ENCODE measurements at regions of chr1 and their contacts with region 1.

Region 1: DNA sequence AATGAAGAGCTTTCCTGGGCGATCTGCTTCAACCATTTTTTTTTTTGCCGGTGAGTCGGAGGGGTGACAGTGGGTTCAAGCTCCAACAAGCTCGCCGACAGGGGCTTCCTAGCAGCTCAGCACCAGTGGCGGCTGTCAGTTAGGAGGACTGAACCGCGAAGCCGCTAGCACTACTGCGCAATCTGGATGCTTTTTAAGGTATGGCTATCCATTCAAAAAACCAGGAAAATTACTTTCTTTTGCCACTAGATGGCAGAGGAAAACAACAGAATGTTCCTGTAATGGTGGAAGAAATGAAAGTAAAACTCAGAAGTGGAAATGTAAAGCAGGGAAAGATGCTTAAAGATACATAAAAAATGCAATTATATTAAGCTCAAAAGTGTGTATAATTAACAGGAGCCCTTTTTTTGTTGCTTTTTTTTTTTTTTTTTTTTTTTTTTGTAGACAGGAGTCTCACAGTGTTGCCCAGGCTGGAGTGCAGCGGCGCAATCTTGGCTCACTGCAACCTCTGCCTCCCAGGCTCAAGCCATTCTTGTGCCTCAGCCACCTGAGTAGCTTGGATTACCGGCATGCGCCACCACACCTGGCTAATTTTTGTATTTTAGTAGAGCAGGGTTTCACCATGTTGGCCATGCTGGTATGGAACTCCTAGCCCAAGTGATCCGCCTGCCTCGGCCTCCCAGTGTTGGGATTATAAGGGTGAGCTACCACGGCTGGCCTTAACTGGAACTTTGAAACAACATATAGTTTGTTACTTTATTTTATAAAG is 8.5 kb downstream of the KYAT3 start:
- DNase-seq: peak; percentile 76
- ATAC-seq: peak; percentile 77
- H3K4me3 ChIP-seq: peak overlapping the region in 3 of 5 experiments; percentile 15 to 28 (median 23)
- H3K4me3 Mint-ChIP-seq: peak overlapping the region; percentile 76
- H3K27ac ChIP-seq: peak overlapping the region; percentile 40 to 62
- H3K27ac Mint-ChIP-seq: peak overlapping the region; percentile 64
- H3K4me1 ChIP-seq: peaks cover 15 to 17% of the 10 kb centered on the region in 2 donors
- H3K4me1 Mint-ChIP-seq: peaks cover 51% of the 10 kb centered on the region
- H3K27me3 ChIP-seq: no peaks in the 10 kb centered on the region
- H3K27me3 Mint-ChIP-seq: no peaks in the 10 kb centered on the region
- CTCF ChIP-seq: peak; percentile 76

Region 2: DNA sequence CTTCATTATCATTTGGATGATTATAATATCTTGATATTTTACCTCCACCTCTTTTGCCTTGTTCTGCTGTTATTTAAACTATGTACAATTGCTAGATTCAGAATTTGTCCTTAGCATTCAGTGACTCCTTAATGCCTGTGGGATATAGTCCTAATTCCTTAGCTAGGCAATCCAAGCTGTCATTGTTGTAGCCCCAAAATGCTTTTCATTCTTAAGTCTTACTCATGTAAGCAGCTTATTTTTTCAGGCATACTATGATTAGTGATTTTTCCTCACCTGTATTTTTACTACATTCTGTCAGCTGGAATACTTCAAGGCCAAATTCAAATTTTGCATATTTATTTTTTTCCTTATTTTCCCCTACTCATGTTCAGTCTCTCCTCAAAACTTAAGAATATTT is 286.5 kb before region 1 on chr1:
- CTCF ChIA-PET with region 1: no interaction called
- POLR2A ChIA-PET with region 1: no interaction called
- intact Hi-C with region 1: no loop called
- DNase-seq: no peak
- ATAC-seq: no peak
- H3K4me3 ChIP-seq: no peak overlapping the region
- H3K4me3 Mint-ChIP-seq: no peak overlapping the region
- H3K27ac ChIP-seq: no peak overlapping the region
- H3K27ac Mint-ChIP-seq: no peak overlapping the region
- H3K4me1 ChIP-seq: peaks cover 17 to 24% of the 10 kb centered on the region in 2 donors
- H3K4me1 Mint-ChIP-seq: peaks cover 51% of the 10 kb centered on the region
- H3K27me3 ChIP-seq: no peaks in the 10 kb centered on the region
- H3K27me3 Mint-ChIP-seq: no peaks in the 10 kb centered on the region
- CTCF ChIP-seq: no peak

Region 3: DNA sequence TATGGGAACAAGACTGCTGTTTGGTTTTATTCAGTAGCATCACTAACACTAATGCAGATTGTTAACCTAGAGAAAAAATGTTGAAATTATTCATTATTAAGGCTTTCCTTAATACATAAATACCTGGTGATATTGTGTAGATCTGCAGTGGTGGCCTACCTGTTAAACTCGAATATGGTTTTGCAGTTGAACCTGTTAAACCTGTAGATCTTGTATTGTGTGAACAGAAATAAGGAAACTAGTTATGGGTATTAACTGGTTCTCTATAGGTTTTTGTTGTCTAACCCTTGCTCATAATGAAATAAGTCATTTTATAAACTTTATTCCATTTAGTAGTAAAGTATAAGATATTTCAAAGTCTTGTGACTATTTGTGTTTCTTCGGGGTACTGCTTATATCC is 276.0 kb before region 1 on chr1:
- CTCF ChIA-PET with region 1: no interaction called
- POLR2A ChIA-PET with region 1: no interaction called
- intact Hi-C with region 1: no loop called
- DNase-seq: no peak
- ATAC-seq: no peak
- H3K4me3 ChIP-seq: no peak overlapping the region
- H3K4me3 Mint-ChIP-seq: no peak overlapping the region
- H3K27ac ChIP-seq: no peak overlapping the region
- H3K27ac Mint-ChIP-seq: no peak overlapping the region
- H3K4me1 ChIP-seq: no peaks in the 10 kb centered on the region
- H3K4me1 Mint-ChIP-seq: peaks cover 12% of the 10 kb centered on the region
- H3K27me3 ChIP-seq: no peaks in the 10 kb centered on the region
- H3K27me3 Mint-ChIP-seq: no peaks in the 10 kb centered on the region
- CTCF ChIP-seq: no peak

Region 4: GRCh38 chr1:88973520-88974137 is 10.3 kb before region 1 on chr1:
- CTCF ChIA-PET with region 1: interaction called, 33 read pairs
- POLR2A ChIA-PET with region 1: no interaction called
- intact Hi-C with region 1: no loop called
- DNase-seq: peak; percentile 58
- ATAC-seq: peak; percentile 31
- H3K4me3 ChIP-seq: no peak overlapping the region
- H3K4me3 Mint-ChIP-seq: no peak overlapping the region
- H3K27ac ChIP-seq: no peak overlapping the region
- H3K27ac Mint-ChIP-seq: no peak overlapping the region
- H3K4me1 ChIP-seq: peaks cover 8 to 9% of the 10 kb centered on the region in 2 donors
- H3K4me1 Mint-ChIP-seq: peaks cover 19% of the 10 kb centered on the region
- H3K27me3 ChIP-seq: no peaks in the 10 kb centered on the region
- H3K27me3 Mint-ChIP-seq: no peaks in the 10 kb centered on the region
- CTCF ChIP-seq: peak; percentile 85

Region 5: DNA sequence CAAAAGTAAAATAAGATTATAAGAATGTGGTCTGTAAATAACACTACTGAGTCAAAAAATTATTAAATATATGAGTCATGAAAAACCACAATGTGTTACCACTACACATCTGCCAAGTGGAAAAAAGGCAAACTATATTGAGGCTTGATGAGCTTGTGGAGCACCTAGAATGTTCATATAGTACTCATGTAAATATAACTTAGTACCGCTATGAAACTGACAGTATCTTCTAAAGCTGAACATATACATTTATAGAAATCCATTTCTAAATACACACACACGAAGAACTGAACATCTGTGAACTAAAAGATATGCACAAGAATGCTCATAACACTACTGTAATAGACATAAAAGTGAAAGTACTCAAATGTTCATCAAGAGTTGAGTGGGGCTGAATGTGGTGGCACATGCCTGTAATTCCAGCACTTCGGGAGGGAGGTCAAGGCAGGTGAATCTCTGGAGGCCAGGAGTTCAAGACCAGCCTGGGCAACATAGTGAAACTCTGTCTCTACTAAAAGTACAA is 57.2 kb after region 1 on chr1:
- CTCF ChIA-PET with region 1: no interaction called
- POLR2A ChIA-PET with region 1: no interaction called
- intact Hi-C with region 1: no loop called
- DNase-seq: no peak
- ATAC-seq: no peak
- H3K4me3 ChIP-seq: no peak overlapping the region
- H3K4me3 Mint-ChIP-seq: no peak overlapping the region
- H3K27ac ChIP-seq: no peak overlapping the region
- H3K27ac Mint-ChIP-seq: no peak overlapping the region
- H3K4me1 ChIP-seq: peaks cover 0 to 3% of the 10 kb centered on the region in 2 donors
- H3K4me1 Mint-ChIP-seq: peaks cover 14% of the 10 kb centered on the region
- H3K27me3 ChIP-seq: no peaks in the 10 kb centered on the region
- H3K27me3 Mint-ChIP-seq: no peaks in the 10 kb centered on the region
- CTCF ChIP-seq: no peak

Region 6: GRCh38 chr1:89085781-89086180 is 101.8 kb after region 1 on chr1:
- CTCF ChIA-PET with region 1: interaction called, 15 read pairs
- POLR2A ChIA-PET with region 1: no interaction called
- intact Hi-C with region 1: no loop called
- DNase-seq: peak; percentile 38
- ATAC-seq: peak; percentile 47
- H3K4me3 ChIP-seq: no peak overlapping the region
- H3K4me3 Mint-ChIP-seq: no peak overlapping the region
- H3K27ac ChIP-seq: no peak overlapping the region
- H3K27ac Mint-ChIP-seq: no peak overlapping the region
- H3K4me1 ChIP-seq: peaks cover 7 to 9% of the 10 kb centered on the region in 2 donors
- H3K4me1 Mint-ChIP-seq: peaks cover 4% of the 10 kb centered on the region
- H3K27me3 ChIP-seq: no peaks in the 10 kb centered on the region
- H3K27me3 Mint-ChIP-seq: no peaks in the 10 kb centered on the region
- CTCF ChIP-seq: peak; percentile 82

Region 7: DNA sequence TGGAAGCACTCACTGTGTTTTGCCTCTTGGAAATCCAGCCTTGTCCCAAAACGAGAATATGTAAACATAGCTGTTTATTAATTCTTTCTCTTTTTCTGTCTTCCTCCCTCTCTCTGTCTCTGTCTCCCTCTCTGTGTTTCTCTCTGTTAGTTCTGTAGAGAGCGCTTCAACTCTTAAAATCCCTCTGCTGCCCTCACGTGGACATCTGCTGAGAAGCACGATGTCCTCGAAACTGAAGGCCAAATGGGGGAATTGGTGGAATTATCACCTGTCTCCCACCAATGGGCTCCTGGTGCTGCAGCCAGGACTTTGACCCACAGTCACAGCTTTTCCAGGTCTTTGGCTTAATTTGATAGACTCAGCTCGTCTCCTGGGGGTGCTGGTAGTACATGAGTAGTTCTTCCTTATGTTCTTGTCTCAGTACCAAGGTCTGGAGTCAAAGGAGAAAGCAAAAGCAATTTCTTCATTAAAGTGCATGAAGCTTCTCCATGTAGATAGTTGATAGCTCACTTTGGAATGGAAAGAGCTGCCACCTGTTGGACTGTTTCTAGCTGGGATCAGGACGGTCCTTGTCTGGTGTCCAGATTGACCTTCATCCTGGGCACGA is 374.4 kb after region 1 on chr1:
- CTCF ChIA-PET with region 1: interaction called, 36 read pairs
- POLR2A ChIA-PET with region 1: no interaction called
- intact Hi-C with region 1: loop called (anchors 1 kb)
- DNase-seq: peak; percentile 83
- ATAC-seq: peak; percentile 92
- H3K4me3 ChIP-seq: no peak overlapping the region
- H3K4me3 Mint-ChIP-seq: no peak overlapping the region
- H3K27ac ChIP-seq: no peak overlapping the region
- H3K27ac Mint-ChIP-seq: no peak overlapping the region
- H3K4me1 ChIP-seq: no peaks in the 10 kb centered on the region
- H3K4me1 Mint-ChIP-seq: peaks cover 2% of the 10 kb centered on the region
- H3K27me3 ChIP-seq: no peaks in the 10 kb centered on the region
- H3K27me3 Mint-ChIP-seq: peaks cover 3% of the 10 kb centered on the region
- CTCF ChIP-seq: peak; percentile 92

Region 8: DNA sequence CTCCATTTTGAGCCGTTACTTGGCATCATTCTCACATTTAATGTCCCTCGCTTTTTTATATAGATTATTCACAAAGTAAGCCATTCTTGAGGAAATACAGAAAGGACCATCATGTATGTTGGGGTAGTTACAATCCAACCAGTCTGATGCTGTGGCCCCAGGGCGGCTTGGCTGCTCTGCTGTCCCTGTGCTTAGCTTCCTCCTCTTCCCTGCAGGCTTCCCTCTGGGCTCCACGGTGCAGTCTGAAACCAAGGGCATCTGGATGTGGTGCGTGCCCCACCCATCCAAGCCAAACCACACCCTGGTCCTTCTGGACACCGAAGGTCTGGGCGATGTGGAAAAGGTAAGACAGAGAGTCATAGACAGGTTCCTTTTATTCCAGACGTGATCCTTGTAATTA is 385.4 kb after region 1 on chr1:
- CTCF ChIA-PET with region 1: no interaction called
- POLR2A ChIA-PET with region 1: no interaction called
- intact Hi-C with region 1: no loop called
- DNase-seq: no peak
- ATAC-seq: no peak
- H3K4me3 ChIP-seq: no peak overlapping the region
- H3K4me3 Mint-ChIP-seq: no peak overlapping the region
- H3K27ac ChIP-seq: no peak overlapping the region
- H3K27ac Mint-ChIP-seq: no peak overlapping the region
- H3K4me1 ChIP-seq: no peaks in the 10 kb centered on the region
- H3K4me1 Mint-ChIP-seq: no peaks in the 10 kb centered on the region
- H3K27me3 ChIP-seq: no peaks in the 10 kb centered on the region
- H3K27me3 Mint-ChIP-seq: peaks cover 9% of the 10 kb centered on the region
- CTCF ChIP-seq: no peak

Measured in B cell (primary cell).